Transverse colon (tissue), 4 donors: ENCODE measurements at regions of chr17 and their contacts with region 1.

Region 1: DNA sequence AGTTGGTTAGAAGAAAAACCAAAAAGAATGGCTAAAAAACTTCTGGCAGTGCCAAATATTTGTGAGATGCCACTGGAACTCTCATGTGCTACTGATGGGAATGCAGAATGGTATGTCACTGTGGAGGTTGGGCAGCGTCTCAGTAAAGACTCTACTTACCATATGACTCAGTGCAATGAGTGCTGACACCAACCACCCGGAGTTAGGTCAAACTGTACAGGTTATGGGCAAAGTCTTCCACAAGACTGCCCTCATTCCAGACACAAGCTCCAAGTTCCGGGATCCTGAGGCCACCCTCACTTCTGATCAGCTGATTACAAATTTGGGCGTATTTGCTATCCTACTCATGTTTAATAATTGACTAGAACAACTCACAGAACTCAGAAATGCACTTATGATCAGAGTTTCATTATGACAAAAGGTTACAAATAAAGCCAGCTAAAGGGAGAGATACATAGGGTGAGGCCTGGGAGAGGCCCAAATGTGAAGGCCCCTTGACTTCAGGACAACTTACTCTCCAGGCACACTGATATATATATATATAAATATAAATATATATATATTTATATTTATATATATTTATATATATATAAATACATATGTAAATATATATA is 114.9 kb downstream of the TRIM37 start:
- DNase-seq: peak; percentile 22
- H3K4me3 ChIP-seq: no peak overlapping the region
- H3K27ac ChIP-seq: peak overlapping the region in 1 of 4 donors; percentile 21
- H3K4me1 ChIP-seq: no peaks in the 10 kb centered on the region
- H3K27me3 ChIP-seq: no peaks in the 10 kb centered on the region
- CTCF ChIP-seq: no peak
- EP300 ChIP-seq: no peak
- POLR2A ChIP-seq: no peak

Region 2: DNA sequence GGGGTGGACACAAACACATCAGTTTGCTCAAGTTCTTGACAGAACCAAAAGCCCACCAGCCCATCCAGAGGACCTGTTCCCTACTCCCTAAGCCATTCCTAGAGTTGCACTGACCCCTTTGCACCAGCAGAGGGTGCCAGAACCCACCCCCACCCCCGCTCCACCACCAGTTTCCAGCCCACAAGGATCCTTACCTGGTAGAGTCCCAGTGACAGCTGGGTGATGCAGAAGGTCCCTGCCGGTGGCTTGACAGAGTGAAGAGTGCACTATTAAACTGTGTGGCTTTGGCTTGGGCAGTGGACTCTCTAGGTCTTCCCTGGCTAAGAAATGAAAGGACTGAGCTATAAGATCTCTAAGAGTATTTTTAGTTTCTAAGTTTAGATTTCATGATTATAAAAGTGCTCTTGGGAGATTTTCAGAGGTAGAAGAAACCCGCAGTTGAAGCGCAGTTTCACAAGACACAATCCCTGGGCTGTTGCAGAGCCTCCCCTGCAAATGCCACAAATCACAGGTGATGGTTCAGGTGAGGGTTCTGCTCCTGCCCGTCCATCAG is 404.0 kb before region 1 on chr17:
- in situ Hi-C with region 1: loop called in 1 of 4 experiments (anchors 25 kb)
- intact Hi-C with region 1: no loop called
- DNase-seq: peak; percentile 54
- H3K4me3 ChIP-seq: no peak overlapping the region
- H3K27ac ChIP-seq: no peak overlapping the region
- H3K4me1 ChIP-seq: no peaks in the 10 kb centered on the region
- H3K27me3 ChIP-seq: no peaks in the 10 kb centered on the region
- CTCF ChIP-seq: peak; percentile 76 to 95 (median 91)
- EP300 ChIP-seq: no peak
- POLR2A ChIP-seq: no peak

Region 3: DNA sequence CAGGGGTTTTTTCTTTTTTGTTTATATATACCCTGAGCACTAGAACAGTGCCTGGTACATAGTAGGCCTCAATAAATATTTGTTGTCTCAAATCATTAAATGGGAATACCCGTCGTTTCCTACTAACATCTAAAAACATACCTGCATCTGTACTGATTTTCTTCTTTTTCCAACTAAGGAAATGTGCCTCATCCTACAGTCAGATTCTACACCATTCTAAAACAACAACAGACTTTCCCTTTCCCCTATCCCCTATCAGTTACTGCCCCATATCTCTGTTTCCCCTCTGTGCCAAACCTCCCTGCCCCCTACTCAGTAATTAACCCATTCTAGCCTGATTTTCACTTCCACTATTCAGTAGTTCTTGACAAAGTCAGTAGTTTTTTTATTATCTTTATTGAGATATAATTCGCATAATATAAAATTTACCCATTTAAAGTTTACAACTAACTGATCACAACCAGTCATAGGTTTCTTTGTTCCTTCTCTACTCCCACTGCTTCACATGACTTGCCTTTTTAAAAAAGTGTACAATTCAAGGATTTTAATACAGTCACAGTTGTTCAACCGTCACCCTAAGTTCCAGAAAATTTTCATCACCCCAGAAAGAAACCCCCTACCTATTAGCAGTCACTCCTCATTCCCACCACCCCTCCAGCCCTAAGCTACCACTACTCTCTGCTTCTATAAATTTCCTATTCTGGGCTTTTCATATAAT is 47.8 kb before region 1 on chr17:
- in situ Hi-C with region 1: no loop called
- intact Hi-C with region 1: no loop called
- DNase-seq: no peak
- H3K4me3 ChIP-seq: no peak overlapping the region
- H3K27ac ChIP-seq: no peak overlapping the region
- H3K4me1 ChIP-seq: no peaks in the 10 kb centered on the region
- H3K27me3 ChIP-seq: no peaks in the 10 kb centered on the region
- CTCF ChIP-seq: no peak
- EP300 ChIP-seq: no peak
- POLR2A ChIP-seq: no peak

Region 4: GRCh38 chr17:59056857-59057256 is 65.0 kb after region 1 on chr17:
- in situ Hi-C with region 1: no loop called
- intact Hi-C with region 1: no loop called
- DNase-seq: no peak
- H3K4me3 ChIP-seq: no peak overlapping the region
- H3K27ac ChIP-seq: no peak overlapping the region
- H3K4me1 ChIP-seq: no peaks in the 10 kb centered on the region
- H3K27me3 ChIP-seq: no peaks in the 10 kb centered on the region
- CTCF ChIP-seq: no peak
- EP300 ChIP-seq: no peak
- POLR2A ChIP-seq: no peak